ENCODE measurements at regions of chr9 and their contacts with region 1.

Region 1: DNA sequence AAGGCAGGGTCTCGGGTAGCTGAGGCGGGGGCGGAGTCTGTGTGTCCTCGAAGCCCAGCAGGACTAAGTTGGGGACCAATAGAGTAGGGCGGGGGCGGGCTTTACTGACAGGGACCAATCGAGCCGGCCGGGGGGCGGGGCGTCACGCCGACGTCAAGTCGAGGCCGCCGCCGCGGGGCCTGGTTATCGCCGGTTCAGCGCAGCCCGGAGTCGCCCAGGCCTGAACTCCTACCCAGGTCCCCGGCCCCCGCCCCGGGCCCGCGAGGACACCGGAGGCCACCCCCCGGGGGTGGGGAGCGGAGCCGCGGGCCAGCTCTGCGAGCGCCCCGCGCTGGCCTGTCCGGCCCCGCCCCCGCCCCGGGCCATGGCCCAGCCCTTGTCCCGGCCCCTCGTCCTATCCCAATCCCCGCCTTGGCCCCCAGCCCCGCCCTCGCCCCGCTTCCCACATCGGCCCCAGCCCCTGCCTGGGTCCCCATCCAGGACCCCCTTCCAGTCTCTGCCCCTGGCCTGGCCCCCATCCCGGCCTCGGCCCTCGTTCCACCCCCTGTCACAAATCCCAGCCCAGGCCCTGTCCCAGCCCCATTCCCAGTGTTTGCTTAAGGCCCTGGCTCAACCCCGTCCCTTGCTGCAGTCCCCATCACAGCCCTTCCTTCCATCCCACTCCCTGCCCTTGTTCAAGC is at the start of gene TMEM8B:
- H3K4me3 Mint-ChIP-seq: peak within 1 kb of the TSS; percentile 87
- H3K27ac Mint-ChIP-seq: peak within 1 kb of the TSS; percentile 67
- H3K4me1 Mint-ChIP-seq: peaks cover 73% of the 10 kb centered on the region
- H3K27me3 Mint-ChIP-seq: peaks cover 54% of the 10 kb centered on the region

Region 2: GRCh38 chr9:35790385-35791296 is 38.6 kb before region 1 on chr9:
- intact Hi-C with region 1: loop called (anchors 1 kb)
- H3K4me3 Mint-ChIP-seq: peak overlapping the region; percentile 70
- H3K27ac Mint-ChIP-seq: peak overlapping the region; percentile 18
- H3K4me1 Mint-ChIP-seq: peaks cover 25% of the 10 kb centered on the region
- H3K27me3 Mint-ChIP-seq: peaks cover 25% of the 10 kb centered on the region

Region 3: DNA sequence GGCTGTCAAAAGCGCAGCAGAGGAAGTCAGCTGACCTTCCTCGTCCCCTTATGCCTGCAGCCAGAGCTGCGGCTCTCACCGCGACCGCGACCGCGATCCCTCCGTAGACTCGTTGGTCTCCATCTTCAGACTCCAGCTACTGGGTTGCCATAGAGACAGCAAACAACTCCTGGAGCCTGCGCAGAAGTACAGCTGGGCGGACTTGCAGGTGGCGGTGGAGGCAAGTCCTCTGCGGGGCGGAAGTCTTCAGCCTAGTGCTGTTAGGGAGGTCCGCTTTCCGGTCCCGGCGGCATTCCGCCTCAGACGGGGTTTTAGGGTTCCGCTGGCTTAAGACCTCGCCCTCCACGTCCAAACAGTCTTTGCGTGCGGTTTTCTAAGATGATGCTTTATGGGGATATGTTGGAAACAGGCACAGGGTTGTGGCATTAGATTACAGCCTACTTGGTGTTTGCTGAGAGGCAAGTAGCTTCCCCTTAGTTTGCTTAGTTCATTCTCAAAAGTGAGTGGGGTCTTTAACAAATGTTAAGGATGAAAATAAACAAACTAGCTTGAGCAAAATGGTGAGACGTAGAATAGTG is 17.1 kb before region 1 on chr9 and contains the start of gene SPAG8:
- intact Hi-C with region 1: no loop called
- H3K4me3 Mint-ChIP-seq: peak within 1 kb of the TSS; percentile 82
- H3K27ac Mint-ChIP-seq: peak within 1 kb of the TSS; percentile 86
- H3K4me1 Mint-ChIP-seq: peaks cover 44% of the 10 kb centered on the region
- H3K27me3 Mint-ChIP-seq: no peaks in the 10 kb centered on the region

Region 4: DNA sequence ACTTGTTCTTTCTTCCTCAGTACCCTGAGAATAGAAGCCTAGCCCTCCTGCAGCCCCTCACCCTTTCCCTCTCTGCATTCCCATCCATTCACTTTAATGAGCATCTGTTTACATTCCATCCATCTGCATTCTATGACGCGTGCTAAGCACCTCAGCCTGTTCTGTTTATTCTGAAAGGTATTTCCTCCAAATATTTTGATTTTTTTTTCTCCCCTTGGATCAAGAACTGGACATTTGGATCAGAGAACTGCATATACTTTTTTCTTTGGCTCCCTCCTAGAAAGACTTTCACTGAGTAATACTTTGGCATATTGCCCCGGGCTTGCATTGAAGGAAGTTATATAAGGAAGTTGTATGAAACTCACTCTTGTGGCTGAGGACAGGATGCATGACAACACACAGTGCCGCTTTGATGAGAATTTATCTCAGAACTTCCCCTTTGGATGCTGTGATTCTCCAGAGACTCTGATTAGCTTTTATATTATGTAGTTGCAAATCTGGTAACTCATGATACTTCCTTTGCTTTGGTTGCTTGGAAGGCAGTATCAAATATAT is 15.6 kb after region 1 on chr9:
- intact Hi-C with region 1: loop called (anchors 2 kb)
- H3K4me3 Mint-ChIP-seq: no peak overlapping the region
- H3K27ac Mint-ChIP-seq: peak overlapping the region; percentile 76
- H3K4me1 Mint-ChIP-seq: peaks cover 79% of the 10 kb centered on the region
- H3K27me3 Mint-ChIP-seq: peaks cover 82% of the 10 kb centered on the region

Measured in dendritic cell treated with granulocyte-macrophage colony-stimulating factor and Interleukin-4, amounts not matched to agents 40 ng/mL and 50 ng/mL, for 4 days (primary cell).